ENCODE measurements at regions of chr15 and their contacts with region 1.

Region 1: DNA sequence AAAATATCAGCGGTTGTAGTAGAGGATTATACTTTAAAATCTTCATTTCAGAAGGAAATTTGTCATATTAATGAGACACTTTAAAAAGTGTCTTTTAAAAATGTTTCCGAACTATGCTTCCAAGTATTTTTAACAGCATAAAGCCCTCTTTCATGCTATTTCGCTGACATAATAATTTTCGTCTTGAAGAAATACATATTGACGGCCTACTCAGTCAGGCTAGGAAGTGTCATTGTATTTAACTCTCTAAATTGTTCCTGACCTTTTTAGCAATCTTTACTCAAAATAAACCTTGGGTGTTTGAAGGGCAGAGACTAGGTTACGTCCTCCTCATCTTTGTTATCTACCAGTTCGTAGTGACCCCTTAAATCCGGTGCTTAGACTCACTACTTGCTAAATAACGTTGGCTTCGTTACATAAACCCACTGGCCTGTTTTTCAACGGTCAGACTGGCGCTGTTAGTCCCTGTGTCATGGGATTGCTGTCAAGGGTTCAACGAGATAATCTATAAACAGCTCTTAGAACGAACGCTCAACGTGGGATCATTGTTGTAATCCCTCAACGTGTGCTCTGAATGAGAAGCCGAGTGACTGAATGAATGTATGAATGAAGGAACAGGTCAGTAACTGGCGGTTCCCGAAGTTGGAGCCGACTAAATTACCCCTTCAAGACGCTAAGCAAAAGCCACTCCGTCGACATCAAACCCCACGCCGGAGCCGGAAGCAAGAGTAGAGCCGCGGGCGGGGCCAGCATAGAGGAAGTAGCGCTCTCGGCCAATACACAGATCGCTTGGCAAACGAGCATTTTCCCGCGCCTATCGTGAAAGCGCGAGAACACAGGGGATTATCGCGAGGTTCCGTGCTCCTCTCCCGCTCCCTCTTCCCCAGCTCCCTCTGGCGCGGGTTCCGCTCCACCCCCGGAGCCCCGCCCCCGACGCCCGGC is 516 bp upstream of the LRRC28 start:
- DNase-seq: peak; percentile 98
- H3K4me3 ChIP-seq: peak overlapping the region; percentile 61 to 83 (median 82)
- H3K27ac ChIP-seq: peak overlapping the region; percentile 88
- H3K4me1 ChIP-seq: peaks cover 18% of the 10 kb centered on the region
- H3K27me3 ChIP-seq: no peaks in the 10 kb centered on the region
- CTCF ChIP-seq: no peak

Region 2: GRCh38 chr15:98881526-98882520 is 368.9 kb before region 1 on chr15:
- CTCF ChIA-PET with region 1: interaction called, 11 read pairs
- dilution Hi-C with region 1: no loop called
- in situ Hi-C with region 1: no loop called
- intact Hi-C with region 1: no loop called
- DNase-seq: peak; percentile 42
- H3K4me3 ChIP-seq: no peak overlapping the region
- H3K27ac ChIP-seq: no peak overlapping the region
- H3K4me1 ChIP-seq: peaks cover 4% of the 10 kb centered on the region
- H3K27me3 ChIP-seq: no peaks in the 10 kb centered on the region
- CTCF ChIP-seq: peak; percentile 59

Region 3: GRCh38 chr15:99385865-99386264 is 135.1 kb after region 1 on chr15:
- CTCF ChIA-PET with region 1: no interaction called
- dilution Hi-C with region 1: no loop called
- in situ Hi-C with region 1: no loop called
- intact Hi-C with region 1: no loop called
- DNase-seq: no peak
- H3K4me3 ChIP-seq: no peak overlapping the region
- H3K27ac ChIP-seq: no peak overlapping the region
- H3K4me1 ChIP-seq: no peaks in the 10 kb centered on the region
- H3K27me3 ChIP-seq: no peaks in the 10 kb centered on the region
- CTCF ChIP-seq: no peak